ENCODE measurements at regions of chr14 and their contacts with region 1.

Region 1: GRCh38 chr14:102749393-102750305 is 27.6 kb upstream of the TRAF3 start:
- DNase-seq: no peak
- ATAC-seq: no peak
- H3K4me3 ChIP-seq: no peak overlapping the region
- H3K27ac ChIP-seq: no peak overlapping the region
- H3K4me1 ChIP-seq: peaks cover 18% of the 10 kb centered on the region
- H3K27me3 ChIP-seq: no peaks in the 10 kb centered on the region
- CTCF ChIP-seq: no peak
- EP300 ChIP-seq: no peak
- POLR2A ChIP-seq: no peak
- RAD21 ChIP-seq: no peak

Region 2: GRCh38 chr14:102333795-102334705 is 415.6 kb before region 1 on chr14:
- CTCF ChIA-PET with region 1: no interaction called
- POLR2A ChIA-PET with region 1: no interaction called
- RAD21 ChIA-PET with region 1: no interaction called
- SMC1A ChIA-PET with region 1: no interaction called
- in situ Hi-C with region 1: no loop called
- intact Hi-C with region 1: no loop called
- DNase-seq: no peak
- ATAC-seq: no peak
- H3K4me3 ChIP-seq: no peak overlapping the region
- H3K27ac ChIP-seq: no peak overlapping the region
- H3K4me1 ChIP-seq: no peaks in the 10 kb centered on the region
- H3K27me3 ChIP-seq: no peaks in the 10 kb centered on the region
- CTCF ChIP-seq: no peak
- EP300 ChIP-seq: no peak
- POLR2A ChIP-seq: no peak
- RAD21 ChIP-seq: no peak

Region 3: DNA sequence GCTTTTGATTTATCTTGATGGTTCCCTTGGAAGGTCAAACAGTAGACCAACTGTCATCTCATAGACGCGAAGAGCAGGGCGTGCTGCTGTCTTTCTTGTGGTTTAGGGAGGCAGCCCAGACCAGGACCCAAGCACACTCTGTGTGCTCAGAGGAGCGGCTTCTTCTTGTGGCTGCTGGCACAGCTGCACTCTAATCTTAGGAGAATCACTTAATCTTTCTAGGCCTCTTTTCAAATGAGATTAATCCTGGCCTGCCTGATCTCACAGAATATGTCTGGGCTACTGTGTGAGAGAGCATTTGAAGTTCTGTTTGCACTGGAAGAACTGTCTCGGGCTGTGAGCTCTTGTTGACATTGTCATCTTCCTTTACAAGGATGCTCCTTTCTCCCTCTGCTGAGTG is 32.4 kb before region 1 on chr14:
- CTCF ChIA-PET with region 1: no interaction called
- POLR2A ChIA-PET with region 1: interaction called, 10 read pairs
- RAD21 ChIA-PET with region 1: no interaction called
- SMC1A ChIA-PET with region 1: interaction called, 3 read pairs
- in situ Hi-C with region 1: no loop called
- intact Hi-C with region 1: no loop called
- DNase-seq: no peak
- ATAC-seq: no peak
- H3K4me3 ChIP-seq: no peak overlapping the region
- H3K27ac ChIP-seq: no peak overlapping the region
- H3K4me1 ChIP-seq: peaks cover 3% of the 10 kb centered on the region; the same call in 1 of the 2 replicates
- H3K27me3 ChIP-seq: no peaks in the 10 kb centered on the region
- CTCF ChIP-seq: no peak
- EP300 ChIP-seq: no peak
- POLR2A ChIP-seq: no peak
- RAD21 ChIP-seq: no peak

Measured in GM12878 (cell line).